ENCODE measurements at regions of chr7 and their contacts with region 1.

Region 1: DNA sequence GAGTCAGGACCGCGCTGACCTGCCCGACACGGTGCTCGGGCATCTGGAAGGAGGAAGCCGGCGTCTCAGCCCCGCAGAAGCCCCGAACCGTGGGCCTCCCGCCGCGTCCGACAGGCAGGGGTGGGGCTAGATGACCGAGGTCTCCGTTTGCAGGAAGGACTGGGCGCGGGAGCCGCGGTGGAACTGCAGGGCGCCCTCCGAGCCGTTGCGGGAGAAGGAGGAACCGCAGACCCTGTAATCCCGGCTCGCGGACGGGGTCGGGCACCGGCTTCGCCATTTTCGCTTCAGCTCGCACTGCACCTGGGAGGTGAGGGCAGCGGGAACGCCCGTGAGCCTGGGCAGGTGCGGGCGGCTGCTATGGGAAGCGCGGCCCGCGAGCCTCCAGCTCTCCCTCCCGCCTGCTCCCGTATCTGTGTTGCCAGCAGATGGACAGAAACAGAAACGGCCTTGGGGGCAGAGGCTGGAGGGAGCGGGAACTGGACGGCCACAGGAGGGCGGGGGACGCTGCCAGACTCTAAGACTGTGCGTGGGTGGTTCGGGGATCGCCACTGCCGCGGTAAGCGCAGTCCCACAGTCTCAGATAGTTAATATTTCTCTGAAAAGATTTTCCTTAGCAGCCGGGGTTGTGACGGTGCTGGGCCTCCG is 114.1 kb downstream of the VIPR2 start:
- DNase-seq: no peak
- ATAC-seq: peak; percentile 70

Region 2: GRCh38 chr7:158772911-158773310 is 257.7 kb before region 1 on chr7:
- intact Hi-C with region 1: no loop called
- DNase-seq: no peak
- ATAC-seq: no peak

Region 3: DNA sequence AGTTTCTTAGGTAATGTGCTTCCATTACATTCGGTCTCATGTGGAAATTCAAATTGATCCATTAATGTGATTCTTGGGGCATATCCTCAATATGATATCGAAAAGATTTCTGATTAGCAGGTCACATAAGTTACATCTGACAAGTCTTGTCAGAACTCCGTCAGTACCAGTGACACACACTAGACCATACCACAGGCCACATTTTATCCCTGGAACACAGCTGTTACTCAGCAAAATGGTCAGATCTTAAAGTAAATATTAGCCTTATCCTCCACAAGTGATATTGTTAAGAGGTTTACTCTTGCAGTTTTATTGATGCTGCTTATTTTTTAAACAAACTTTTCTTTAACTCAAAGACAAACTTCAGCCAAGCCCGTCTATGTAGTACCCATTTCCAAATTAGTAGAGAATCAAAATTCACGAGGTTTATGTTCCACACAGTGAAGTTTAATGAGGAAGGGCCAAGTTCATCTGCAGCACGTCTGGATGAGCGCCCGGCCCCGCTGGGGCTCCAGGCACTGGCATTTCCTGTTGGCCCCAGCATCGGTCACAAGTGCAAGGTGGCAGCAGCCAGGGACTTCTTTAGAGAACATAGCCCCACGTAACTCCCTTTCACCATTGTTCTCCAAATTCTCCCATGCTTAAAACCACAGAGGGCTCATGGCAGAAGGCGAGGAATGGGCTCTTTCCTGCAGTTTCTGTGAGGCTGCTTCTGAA is 18.1 kb before region 1 on chr7:
- intact Hi-C with region 1: no loop called
- DNase-seq: peak; percentile 87
- ATAC-seq: peak; percentile 41

Region 4: DNA sequence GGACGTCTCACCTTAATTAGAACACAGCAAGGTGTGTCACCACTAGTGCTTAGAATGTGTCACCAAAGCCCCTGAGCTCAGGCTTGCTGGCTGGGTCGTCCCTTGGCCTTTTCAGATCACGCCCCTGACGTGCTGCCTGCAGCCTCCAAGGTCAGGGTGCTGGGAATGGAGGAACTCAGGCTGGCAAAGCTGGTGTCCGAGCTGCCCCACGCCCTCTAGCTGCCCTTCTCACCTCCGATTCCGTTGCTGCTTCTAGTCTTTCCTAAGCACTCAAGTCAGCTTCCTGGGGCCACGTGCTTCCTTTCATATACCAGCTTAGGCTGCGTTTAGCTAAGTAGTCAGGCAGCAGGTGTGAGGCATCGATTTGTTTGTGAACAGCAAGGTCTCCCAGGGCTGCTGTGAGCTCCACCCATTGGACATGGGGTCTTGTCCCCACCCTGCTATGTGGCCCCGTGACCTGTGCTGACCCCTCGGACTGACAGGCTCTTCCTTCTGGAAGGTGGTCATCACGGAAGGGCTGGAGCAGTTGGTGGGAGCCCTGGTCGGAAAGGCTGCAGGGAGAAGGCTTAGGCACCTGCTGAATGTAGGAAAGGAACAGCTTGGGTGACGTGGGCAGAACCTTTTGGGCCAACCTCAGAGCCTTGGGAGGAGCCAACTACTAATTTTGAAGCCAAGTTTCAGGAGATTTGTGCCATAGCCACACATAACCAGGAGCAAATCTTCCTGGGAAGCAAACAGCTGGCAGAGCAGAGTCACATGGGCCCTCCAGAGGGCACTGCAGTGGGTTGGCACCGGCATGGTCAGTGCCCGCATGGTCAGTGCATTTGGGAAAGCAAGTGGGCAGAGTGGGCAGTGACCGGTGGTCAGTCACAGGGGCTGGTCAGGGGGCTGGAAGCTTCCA is 85.2 kb after region 1 on chr7:
- intact Hi-C with region 1: loop called (anchors 5 kb)
- DNase-seq: peak; percentile 37
- ATAC-seq: no peak

Region 5: DNA sequence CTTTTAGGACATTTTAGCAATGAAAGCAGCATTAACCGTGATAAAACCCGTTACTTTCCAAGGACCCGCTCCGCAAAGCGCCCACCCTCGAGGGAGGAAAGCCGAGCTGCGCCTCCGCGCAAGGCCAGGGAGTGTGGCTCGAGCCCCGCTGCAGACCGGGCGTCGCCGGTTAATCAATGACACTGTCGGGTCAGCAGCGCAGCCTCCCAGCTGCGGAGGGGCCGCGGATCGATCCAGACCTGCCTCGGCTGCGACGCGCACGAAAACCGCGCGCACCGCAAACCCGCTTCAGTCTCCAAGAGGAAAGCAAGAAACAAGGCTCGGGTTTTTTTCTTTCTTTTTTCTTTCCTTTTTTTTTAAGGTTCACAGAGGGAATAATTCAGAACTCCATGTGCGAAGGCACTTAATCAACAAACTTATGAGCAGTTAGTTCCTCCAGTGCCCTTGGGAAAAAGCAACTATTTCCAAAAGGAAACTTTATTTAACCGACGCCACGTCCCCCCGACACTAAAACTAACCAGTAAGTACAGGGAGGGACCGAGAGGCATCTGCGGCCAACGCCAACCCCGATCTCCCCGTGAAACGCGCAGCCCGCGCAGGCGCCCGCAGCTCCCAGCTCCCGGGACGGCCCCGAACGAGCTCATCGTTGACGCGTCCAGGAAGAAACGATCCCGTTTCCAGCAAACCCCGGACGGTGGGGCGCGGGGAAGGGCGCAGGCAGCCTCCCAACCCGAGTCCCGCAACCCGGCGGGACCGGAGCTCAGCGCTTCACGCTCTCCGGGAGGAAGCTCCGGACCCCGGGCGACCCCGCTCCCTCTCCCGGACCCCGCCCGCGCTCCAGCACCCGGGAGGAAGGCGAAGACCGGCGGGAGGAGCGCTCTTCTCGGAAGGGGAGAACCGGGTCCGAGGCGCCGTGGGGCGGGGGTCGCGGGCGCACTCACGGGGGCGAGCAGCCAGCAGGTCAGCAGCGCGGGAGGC is 113.5 kb after region 1 on chr7:
- intact Hi-C with region 1: loop called (anchors 5 kb)
- DNase-seq: no peak
- ATAC-seq: peak; percentile 45

Measured in Right ventricle myocardium inferior (tissue), 1 donor.